ENCODE measurements at regions of chr11 and their contacts with region 1.

Region 1: DNA sequence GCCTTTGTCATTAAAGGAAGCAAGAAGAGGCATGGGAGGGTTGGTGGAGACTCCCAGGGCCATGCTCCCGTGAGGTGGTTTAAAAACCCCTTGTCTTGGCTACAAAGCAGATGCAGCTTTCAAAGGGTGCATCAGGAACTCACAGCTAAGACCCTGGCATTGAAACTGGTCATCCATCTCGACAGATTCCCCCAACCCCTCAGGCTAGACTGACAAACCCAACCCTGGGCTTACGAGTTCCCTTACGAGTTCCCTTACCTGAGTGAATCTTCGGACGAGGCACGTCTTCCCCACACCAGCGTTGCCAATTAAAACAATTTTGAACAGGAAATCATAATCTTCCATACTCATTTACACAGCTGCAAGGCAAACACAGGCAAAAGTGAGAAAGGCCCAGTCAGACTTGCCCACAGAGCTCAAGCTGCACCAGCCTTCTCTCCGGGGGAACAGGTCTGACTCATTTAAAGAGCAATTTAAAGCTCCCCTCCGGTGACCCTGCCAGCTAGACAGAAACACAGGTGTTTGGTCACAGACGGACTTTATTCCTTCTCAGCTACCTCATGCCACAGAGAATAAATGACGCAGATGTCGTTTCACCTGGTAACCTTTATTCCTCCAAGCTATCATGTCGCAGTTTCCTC is 74.6 kb downstream of the RAB30 start:
- DNase-seq: no peak
- H3K4me3 ChIP-seq: no peak overlapping the region
- H3K27ac ChIP-seq: peak overlapping the region in 1 of 4 donors; percentile 22
- H3K4me1 ChIP-seq: peaks cover 61 to 72% (median 62%) of the 10 kb centered on the region in 4 donors
- H3K27me3 ChIP-seq: no peaks in the 10 kb centered on the region
- CTCF ChIP-seq: no peak
- EP300 ChIP-seq: no peak
- POLR2A ChIP-seq: no peak

Region 2: DNA sequence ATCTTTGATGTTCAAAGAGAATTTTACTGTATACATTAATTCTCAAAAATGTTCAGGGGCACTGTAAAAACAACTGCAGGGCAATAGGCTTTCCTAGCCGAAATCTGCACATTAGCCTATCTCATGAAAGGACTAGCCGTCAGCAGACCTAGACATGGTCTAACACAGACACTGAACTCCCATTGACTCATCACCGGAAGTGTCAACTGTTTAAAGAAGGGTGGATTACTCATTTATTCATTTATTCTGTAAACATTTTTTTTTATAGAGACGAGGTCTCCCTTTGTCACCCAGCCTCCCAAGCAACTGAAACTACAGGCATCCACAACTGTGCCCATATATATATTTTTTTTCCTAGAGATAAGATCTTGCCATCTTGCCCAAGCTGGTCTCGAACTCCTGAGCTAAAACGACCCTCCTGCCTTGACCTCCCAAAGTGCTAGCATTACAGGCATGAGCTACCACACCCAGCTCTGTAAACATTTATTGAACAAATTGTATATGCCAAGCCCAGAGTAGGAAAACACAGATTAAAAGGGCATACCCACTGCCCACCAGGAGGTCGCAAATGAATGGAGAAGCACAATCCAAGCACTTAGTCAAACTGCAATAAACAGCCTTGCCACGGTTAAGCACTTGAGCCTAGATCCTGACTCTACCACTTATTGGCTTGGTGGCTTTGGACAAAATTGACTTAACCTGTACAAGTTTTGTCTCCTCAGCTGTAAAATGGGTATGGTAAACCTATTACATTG is 48.0 kb after region 1 on chr11:
- intact Hi-C with region 1: loop called (anchors 10 kb)
- DNase-seq: no peak
- H3K4me3 ChIP-seq: no peak overlapping the region
- H3K27ac ChIP-seq: peak overlapping the region in 2 of 4 donors; percentile 1 to 2
- H3K4me1 ChIP-seq: peaks cover 37 to 57% (median 55%) of the 10 kb centered on the region in 4 donors
- H3K27me3 ChIP-seq: no peaks in the 10 kb centered on the region
- CTCF ChIP-seq: no peak
- EP300 ChIP-seq: no peak
- POLR2A ChIP-seq: no peak

Region 3: GRCh38 chr11:83071567-83072349 is 74.7 kb after region 1 on chr11 and contains the start of gene RAB30:
- intact Hi-C with region 1: loop called (anchors 10 kb)
- DNase-seq: peak; percentile 99
- H3K4me3 ChIP-seq: peak within 1 kb of the TSS; percentile 73 to 85 (median 77)
- H3K27ac ChIP-seq: peak within 1 kb of the TSS; percentile 92 to 95 (median 92)
- H3K4me1 ChIP-seq: peaks cover 37 to 53% (median 46%) of the 10 kb centered on the region in 4 donors
- H3K27me3 ChIP-seq: no peaks in the 10 kb centered on the region
- CTCF ChIP-seq: no peak
- EP300 ChIP-seq: no peak
- POLR2A ChIP-seq: peak; percentile 76
- total RNA-seq, gene RAB30: 11.3 to 19.8 (median 18.2) TPM

Region 4: DNA sequence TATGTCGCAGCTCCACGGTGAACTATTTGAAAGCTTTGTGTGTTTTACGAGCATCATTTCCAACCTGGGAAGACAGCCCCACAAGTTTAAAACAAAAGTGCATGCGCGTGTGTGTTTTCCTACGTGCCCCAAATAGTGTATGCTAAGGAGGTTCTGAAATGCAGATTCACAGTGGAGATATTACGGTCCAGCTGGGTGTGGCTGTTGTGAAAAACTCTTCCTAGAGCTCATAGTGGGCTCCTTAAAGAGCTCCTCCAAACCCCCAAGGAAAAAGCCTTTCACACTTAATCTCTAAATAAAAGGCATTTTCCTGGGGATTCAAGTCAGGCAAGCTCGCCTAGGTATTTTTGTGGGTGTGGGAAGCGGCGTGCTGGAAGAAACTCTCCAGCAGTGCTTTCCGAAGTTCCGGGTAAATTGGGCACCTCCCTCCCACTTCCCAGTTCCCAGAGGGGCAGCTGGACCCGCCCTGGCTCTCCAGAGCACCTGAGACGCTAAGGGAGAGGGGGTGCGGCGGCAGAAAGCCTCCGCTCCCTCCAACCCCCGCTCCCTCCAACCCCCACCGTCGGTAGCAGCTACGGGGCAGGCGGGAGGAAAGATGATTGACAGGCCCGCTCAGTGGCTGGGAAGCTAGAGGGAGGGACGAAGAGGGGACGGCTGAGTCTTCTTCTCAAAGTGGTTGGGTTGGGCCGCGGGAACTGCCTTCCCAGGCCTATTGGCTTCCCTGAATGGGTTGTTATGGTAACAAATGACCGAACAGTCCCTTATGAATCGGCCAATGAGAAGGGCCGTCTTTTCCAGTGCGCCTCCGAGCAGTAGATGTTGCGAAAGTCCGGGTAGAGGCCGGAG is 159.3 kb after region 1 on chr11:
- intact Hi-C with region 1: loop called (anchors 10 kb)
- DNase-seq: peak; percentile 100
- H3K4me3 ChIP-seq: peak overlapping the region; percentile 77 to 97 (median 92)
- H3K27ac ChIP-seq: peak overlapping the region; percentile 94 to 100 (median 98)
- H3K4me1 ChIP-seq: peaks cover 16 to 27% (median 24%) of the 10 kb centered on the region in 4 donors
- H3K27me3 ChIP-seq: no peaks in the 10 kb centered on the region
- CTCF ChIP-seq: no peak
- EP300 ChIP-seq: no peak
- POLR2A ChIP-seq: peak; percentile 94

Measured in esophagus muscularis mucosa (tissue), 4 donors.